Stomach (tissue), 19 donors: ENCODE measurements at regions of chr2 and their contacts with region 1.

Region 1: DNA sequence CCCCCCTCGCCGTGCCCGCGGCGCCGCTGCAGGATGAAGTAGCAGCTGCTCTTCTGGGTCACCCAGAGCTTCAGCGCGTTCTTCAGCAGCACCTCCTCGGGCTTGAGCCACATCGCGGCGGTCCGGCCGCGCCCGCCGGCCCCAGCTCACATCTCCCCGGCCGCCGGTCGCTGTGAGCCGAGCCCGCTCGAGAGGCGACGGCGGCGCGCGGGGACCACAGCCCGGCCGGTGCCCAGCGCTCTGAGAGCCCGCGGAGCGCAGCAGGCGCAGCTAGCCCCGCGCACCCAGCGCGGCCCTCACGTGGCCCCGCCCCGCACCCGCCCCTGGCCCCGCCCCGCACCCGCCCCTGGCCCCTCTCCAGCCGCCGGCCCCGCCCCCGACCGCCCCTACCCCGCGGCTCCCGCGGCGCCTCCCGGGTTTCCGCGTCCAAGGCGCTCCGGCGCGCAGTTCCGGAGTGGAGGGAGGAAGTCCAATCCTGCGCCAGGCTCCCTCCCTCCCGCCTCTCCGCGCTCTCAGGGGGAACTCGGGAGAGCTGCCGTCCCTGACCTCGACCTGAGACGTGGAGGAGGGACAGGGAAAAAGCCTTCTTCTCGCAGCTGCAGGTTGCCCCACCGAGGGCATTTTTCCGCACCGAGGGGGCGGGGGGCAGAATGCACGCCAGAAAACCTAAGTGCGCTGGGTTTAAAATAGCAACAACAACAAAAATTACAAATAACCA is at the start of gene TBC1D8:
- DNase-seq: peak; percentile 90 to 95
- H3K4me3 ChIP-seq: peak within 1 kb of the TSS; percentile 75 to 97 (median 80)
- H3K27ac ChIP-seq: peak within 1 kb of the TSS; percentile 81 to 95 (median 89)
- H3K4me1 ChIP-seq: peaks cover 38 to 67% (median 52%) of the 10 kb centered on the region in 4 donors
- H3K27me3 ChIP-seq: no peaks in the 10 kb centered on the region
- CTCF ChIP-seq: no peak
- EP300 ChIP-seq: no peak
- POLR2A ChIP-seq: no peak
- total RNA-seq, gene TBC1D8: 74.2 to 179 (median 120) TPM

Region 2: DNA sequence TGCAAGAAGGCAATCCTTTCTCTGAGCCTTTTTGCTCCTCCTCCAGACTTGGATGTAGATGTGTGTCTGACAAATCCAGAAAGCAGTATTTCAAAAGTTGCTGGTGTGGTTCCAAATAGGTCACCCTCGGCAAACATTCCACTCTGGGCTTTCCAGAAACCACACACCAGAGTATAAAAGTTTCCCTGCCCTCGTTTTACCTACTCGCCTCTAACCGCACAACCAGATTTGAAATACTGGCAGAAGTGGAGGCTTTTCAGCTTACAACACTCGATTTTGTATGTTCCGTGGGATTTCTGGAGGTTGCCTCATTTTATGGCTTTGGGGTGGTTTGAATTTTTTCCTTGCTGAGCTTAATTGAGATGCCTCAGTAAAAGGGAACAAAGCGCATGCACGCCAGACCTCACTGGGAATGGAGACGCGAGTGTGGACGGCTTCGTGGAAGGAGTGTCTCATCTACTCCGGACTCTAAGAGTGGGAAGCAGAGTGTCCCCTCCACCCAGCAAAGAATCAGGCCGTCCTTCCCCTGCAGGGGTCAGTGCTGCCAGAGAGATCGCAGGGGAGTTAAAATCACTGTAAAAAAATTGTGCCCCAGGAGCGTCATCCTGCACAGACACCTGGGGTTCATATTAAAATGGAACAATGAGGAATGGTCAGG is 193.2 kb before region 1 on chr2:
- intact Hi-C with region 1: no loop called
- DNase-seq: peak; percentile 56 to 70
- H3K4me3 ChIP-seq: no peak overlapping the region
- H3K27ac ChIP-seq: peak overlapping the region; percentile 6 to 64 (median 56)
- H3K4me1 ChIP-seq: peaks cover 14 to 29% (median 22%) of the 10 kb centered on the region in 4 donors
- H3K27me3 ChIP-seq: no peaks in the 10 kb centered on the region
- CTCF ChIP-seq: no peak
- EP300 ChIP-seq: no peak
- POLR2A ChIP-seq: no peak

Region 3: DNA sequence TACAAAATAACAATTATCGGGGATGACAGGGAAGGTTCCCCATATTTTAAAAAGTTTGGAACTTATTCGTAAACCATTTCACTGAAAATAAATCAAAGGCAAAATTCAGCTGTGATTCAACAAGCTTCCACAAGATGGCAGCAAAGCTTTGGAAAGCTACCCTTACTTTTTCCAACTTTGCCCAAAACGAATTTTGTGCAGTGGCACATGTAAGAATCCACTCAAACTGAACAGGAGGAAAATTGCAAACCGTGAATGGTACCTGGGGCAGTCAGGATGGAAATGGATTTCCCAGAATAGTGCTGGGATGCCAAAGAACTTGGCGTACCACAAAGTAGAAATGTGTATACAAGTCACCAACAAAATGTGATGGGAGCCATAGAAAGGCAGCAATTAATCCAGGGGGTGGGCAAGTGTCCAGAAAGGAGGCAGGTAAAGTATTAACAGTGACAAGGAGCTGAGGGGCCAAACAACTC is 138.6 kb before region 1 on chr2:
- intact Hi-C with region 1: loop called (anchors 5 kb)
- DNase-seq: peak in 1 of 2 donors; percentile 73
- H3K4me3 ChIP-seq: no peak overlapping the region
- H3K27ac ChIP-seq: no peak overlapping the region
- H3K4me1 ChIP-seq: peaks cover 0 to 24% (median 6%) of the 10 kb centered on the region in 4 donors
- H3K27me3 ChIP-seq: no peaks in the 10 kb centered on the region
- CTCF ChIP-seq: peak in 5 of 7 experiments; percentile 71 to 91 (median 83)
- EP300 ChIP-seq: no peak
- POLR2A ChIP-seq: no peak

Region 4: GRCh38 chr2:101036562-101037457 is 114.5 kb before region 1 on chr2:
- intact Hi-C with region 1: loop called (anchors 5 kb)
- DNase-seq: peak in 1 of 2 donors; percentile 57
- H3K4me3 ChIP-seq: no peak overlapping the region
- H3K27ac ChIP-seq: no peak overlapping the region
- H3K4me1 ChIP-seq: peaks cover 0 to 6% (median 0%) of the 10 kb centered on the region in 4 donors
- H3K27me3 ChIP-seq: no peaks in the 10 kb centered on the region
- CTCF ChIP-seq: peak in 5 of 7 experiments; percentile 22 to 50 (median 46)
- EP300 ChIP-seq: no peak
- POLR2A ChIP-seq: no peak